HEK293 (cell line): ENCODE measurements at regions of chr14 and their contacts with region 1.

Region 1: GRCh38 chr14:22112004-22112403 is 438.4 kb upstream of the OR4E1 start:
- H3K4me3 ChIP-seq: no peak overlapping the region
- H3K27ac ChIP-seq: no peak overlapping the region
- H3K4me1 ChIP-seq: no peaks in the 10 kb centered on the region
- CTCF ChIP-seq: no peak

Region 2: GRCh38 chr14:21825149-21825743 is 286.8 kb before region 1 on chr14:
- CTCF ChIA-PET with region 1: no interaction called
- POLR2A ChIA-PET with region 1: interaction called, 10 read pairs
- H3K4me3 ChIP-seq: no peak overlapping the region
- H3K27ac ChIP-seq: no peak overlapping the region
- H3K4me1 ChIP-seq: peaks cover 3% of the 10 kb centered on the region; the same call in 1 of the 2 replicates
- CTCF ChIP-seq: peak; percentile 46; the same call in 1 of the 2 replicates

Region 3: GRCh38 chr14:22099942-22100763 is 11.9 kb before region 1 on chr14:
- CTCF ChIA-PET with region 1: interaction called, 21 read pairs
- POLR2A ChIA-PET with region 1: no interaction called
- H3K4me3 ChIP-seq: no peak overlapping the region
- H3K27ac ChIP-seq: no peak overlapping the region
- H3K4me1 ChIP-seq: no peaks in the 10 kb centered on the region
- CTCF ChIP-seq: peak; percentile 73

Region 4: DNA sequence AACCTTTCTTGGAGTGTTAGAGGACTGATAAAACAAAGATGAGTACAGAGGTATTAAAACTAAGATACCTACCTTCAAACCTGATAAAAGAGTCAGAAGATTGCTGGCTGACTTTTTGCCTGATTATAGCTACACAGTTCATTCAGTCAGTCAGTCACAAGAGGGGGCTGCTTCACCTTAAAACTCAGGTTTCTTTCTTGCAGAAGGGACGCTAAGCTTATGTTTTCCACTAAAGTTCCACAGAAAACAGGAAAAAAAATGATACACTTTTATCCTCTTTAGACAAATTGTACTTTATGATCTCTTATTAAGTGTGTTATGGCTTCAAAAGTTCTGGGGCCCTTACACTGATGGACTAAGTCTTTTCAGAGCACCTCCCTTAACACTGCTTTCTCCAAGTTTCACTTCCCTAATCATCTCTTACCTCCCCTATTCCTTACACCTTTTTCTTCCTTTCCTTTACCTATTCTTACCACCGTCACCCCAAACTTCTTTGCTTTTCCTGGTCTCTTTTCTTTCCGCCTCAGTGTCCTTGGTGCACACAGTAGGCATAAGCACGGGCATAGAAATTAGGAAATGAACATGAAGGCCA is 10.3 kb after region 1 on chr14:
- CTCF ChIA-PET with region 1: interaction called, 22 read pairs
- POLR2A ChIA-PET with region 1: interaction called, 3 read pairs
- H3K4me3 ChIP-seq: no peak overlapping the region
- H3K27ac ChIP-seq: no peak overlapping the region
- H3K4me1 ChIP-seq: no peaks in the 10 kb centered on the region
- CTCF ChIP-seq: no peak

Region 5: GRCh38 chr14:22131749-22132476 is 19.9 kb after region 1 on chr14:
- CTCF ChIA-PET with region 1: interaction called, 24 read pairs
- POLR2A ChIA-PET with region 1: no interaction called
- H3K4me3 ChIP-seq: no peak overlapping the region
- H3K27ac ChIP-seq: no peak overlapping the region
- H3K4me1 ChIP-seq: no peaks in the 10 kb centered on the region
- CTCF ChIP-seq: no peak

Region 6: GRCh38 chr14:22200977-22201605 is 89.1 kb after region 1 on chr14:
- CTCF ChIA-PET with region 1: interaction called, 10 read pairs
- POLR2A ChIA-PET with region 1: no interaction called
- H3K4me3 ChIP-seq: no peak overlapping the region
- H3K27ac ChIP-seq: no peak overlapping the region
- H3K4me1 ChIP-seq: no peaks in the 10 kb centered on the region
- CTCF ChIP-seq: no peak

Region 7: DNA sequence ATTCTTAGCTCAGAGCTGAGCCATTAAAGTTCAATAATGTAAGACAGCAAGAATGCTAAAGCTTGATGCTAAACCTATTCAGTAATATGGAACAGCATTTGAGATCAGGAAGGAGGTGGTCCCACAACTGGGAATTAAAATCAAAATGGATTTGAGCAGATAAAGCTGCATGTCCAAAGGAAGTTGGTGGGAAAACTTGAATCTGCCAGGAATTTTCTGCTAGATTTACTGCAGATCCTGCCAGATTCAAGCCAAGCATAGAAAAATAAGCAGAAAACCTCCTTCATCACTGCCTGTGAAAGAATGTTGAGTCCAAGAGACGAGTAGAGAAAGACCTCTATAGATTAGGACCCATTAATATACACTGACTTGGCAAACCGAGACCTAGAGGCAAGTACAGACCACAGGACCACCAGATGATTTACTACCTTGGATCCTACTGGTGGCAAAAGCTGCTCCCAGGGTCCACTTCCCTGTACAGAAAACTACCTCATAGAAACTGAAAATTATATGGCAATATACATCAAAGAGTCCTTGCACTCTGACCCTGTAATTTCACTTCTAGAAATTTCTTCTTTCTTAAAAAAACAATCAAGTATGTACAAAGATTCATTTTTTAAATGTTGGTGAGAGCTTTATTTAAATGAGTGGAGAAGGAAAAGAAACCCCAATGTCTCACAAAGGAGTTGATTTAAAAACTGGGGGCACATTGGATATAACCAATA is 213.8 kb after region 1 on chr14:
- CTCF ChIA-PET with region 1: no interaction called
- POLR2A ChIA-PET with region 1: no interaction called
- H3K4me3 ChIP-seq: no peak overlapping the region
- H3K27ac ChIP-seq: no peak overlapping the region
- H3K4me1 ChIP-seq: no peaks in the 10 kb centered on the region
- CTCF ChIP-seq: no peak